Endothelial cell of umbilical vein (primary cell): ENCODE measurements at regions of chr20 and their contacts with region 1.

Region 1: DNA sequence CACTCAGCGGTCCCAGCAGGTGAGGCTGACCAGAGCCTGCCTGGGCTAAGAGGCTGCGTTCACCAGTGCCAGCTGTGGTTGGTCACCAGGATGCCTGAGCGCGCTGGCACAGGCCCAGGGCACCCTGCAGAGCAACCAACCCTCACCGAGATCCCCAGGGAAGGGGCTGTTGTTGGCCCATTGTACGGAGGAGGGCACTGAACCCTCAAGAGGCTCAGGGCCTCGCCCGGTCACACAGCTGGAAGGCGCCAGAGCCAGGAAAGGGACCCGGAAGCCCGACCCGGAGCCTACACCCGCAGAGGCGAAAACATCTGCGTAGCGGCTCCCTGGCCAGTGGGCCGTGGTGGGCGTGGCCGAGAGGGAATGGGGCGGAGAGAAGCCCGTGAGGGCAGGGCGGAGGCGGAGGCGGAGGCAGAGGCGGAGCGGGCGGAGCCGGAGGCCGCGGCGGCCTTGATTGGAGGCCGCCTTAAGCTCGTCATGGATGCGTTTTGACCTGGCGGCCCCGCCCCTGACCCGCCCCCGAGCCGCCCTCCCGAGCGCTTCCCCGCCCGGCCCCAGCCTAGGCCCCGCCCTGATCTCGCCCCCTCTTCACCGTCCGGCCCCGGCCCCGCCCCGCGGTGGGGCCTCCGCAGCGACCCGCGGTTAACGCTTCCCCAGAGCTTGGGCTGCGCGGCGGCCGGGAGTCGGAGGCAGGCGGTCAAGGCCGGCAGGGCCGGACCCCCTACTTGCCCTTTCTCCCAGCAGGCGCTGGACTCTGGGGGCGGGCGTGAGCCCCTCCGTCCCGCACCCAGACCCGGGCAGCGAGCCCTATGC is 2.2 kb upstream of the MRGBP start:
- DNase-seq: peak; percentile 96
- H3K4me3 ChIP-seq: peak overlapping the region; percentile 4 to 60 (median 43)
- H3K27ac ChIP-seq: peak overlapping the region; percentile 72
- H3K4me1 ChIP-seq: peaks cover 22% of the 10 kb centered on the region
- H3K27me3 ChIP-seq: no peaks in the 10 kb centered on the region
- CTCF ChIP-seq: no peak
- POLR2A ChIP-seq: peak; percentile 89

Region 2: DNA sequence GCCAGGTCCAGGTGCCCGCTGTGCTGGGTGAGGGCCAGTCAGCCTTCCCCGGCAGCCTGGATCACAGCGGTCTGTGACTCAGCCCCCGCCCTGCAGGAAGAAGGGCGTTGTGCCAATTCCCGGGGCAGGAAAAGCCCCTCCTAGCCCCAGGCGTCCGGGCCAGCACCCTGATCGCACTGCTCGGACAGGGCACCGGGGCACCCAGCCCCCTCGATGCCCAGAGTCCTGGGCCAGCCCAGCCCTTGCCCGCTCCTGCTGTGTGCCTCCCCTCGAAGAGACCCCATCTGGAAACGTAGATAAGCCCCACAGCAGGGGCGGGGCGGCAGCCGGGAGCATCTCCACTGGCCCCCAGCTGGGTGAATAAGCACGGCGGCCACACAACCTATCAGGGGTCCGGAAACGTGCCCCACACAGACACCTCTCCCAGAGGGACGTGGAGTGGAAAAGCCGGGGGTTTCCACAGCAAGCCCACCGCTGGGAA is 436.9 kb before region 1 on chr20:
- CTCF ChIA-PET with region 1: no interaction called
- POLR2A ChIA-PET with region 1: no interaction called
- dilution Hi-C with region 1: no loop called
- intact Hi-C with region 1: loop called (anchors 1 kb)
- DNase-seq: peak; percentile 84
- H3K4me3 ChIP-seq: no peak overlapping the region
- H3K27ac ChIP-seq: peak overlapping the region; percentile 89
- H3K4me1 ChIP-seq: peaks cover 52% of the 10 kb centered on the region
- H3K27me3 ChIP-seq: no peaks in the 10 kb centered on the region
- CTCF ChIP-seq: no peak
- POLR2A ChIP-seq: peak; percentile 49

Region 3: DNA sequence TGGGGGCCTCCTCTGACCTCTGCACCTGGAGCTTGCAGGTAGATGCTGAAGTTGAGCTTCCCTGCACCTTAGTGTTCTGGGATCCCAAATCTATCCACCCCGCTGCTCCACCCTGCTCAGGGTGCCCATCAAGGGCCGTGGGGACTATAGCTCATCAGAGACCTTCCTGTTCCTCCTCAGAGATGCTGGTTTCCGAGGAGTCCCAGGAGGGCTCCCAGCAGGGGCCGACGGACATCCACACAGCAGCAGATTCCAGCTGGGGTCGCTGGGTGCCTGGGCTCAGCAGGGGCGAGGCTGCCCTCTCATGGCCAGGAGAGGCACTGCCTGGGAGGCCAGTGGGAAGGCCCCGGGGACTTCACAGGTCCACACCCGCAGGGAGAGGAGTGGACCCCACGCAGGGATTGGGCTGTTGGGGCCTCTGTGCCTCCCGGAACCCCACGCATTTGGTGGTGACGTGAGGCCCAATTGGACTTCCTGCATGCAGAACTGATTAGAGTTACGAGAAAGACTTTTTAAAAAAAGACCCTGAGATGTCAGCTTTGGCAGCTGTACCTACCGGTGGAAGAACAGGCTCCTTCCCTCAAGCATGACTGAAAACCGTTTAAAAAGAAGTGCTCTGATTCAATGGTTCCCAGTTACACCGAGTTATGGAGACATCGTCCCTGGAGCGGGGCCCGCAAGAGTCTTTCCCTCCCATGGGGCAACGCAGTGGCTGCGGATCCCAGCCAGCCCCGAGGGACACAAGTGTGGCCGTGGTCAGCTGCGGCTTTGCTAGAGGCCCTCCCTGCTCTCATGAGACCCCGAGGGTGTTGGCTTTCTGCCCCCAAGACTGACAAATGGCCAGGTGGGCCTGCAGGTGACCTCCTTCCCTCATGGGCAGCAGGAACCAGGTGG is 177.1 kb before region 1 on chr20:
- CTCF ChIA-PET with region 1: interaction called, 15 read pairs
- POLR2A ChIA-PET with region 1: no interaction called
- dilution Hi-C with region 1: no loop called
- intact Hi-C with region 1: no loop called
- DNase-seq: peak; percentile 75
- H3K4me3 ChIP-seq: no peak overlapping the region
- H3K27ac ChIP-seq: no peak overlapping the region
- H3K4me1 ChIP-seq: peaks cover 20% of the 10 kb centered on the region
- H3K27me3 ChIP-seq: no peaks in the 10 kb centered on the region
- CTCF ChIP-seq: peak; percentile 96 to 99
- POLR2A ChIP-seq: no peak

Region 4: DNA sequence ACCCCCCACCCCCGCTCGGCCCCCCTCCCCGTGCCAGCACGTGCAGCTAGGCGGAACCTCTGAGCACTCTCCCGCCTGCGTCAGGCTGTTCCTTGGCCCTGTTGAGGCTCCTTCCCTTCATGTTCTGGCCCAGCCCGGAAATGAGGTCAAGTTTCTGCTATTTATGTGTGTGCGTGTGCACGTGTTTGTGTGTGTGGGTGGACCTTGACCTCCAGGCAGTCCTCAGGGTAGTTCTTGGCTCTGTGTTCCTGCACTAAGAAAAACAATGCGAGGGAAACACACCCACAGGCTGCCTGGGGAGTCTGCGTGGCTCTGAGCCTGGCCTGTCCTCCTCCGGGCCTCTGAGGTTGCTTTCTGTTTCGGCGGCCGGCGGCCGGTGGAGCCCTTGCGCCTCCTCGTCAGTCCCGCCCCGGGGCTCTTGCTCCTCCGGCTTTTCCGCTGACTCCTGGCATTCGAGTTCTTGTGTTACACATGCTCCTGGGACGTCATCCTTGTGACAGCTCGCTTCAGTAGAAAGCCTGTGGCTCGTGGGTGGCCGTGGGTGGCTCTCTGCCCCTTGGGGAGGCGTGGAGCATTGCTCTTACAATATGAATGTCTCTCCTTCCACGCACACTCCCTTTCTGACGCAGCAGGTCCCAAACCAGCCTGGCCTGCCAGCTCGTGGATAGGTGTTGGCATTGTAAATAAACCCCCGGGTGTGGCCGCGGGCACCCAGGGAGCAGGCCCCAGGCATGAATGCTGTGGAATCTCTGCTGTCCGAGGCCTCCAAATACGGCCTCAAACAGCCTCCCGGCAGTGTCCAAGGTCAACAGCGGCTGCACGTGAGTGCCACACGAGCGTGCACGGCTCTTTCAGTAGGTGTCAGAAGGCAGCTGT is 141.8 kb before region 1 on chr20:
- CTCF ChIA-PET with region 1: interaction called, 4 read pairs
- POLR2A ChIA-PET with region 1: no interaction called
- dilution Hi-C with region 1: no loop called
- intact Hi-C with region 1: loop called (anchors 1 kb)
- DNase-seq: peak; percentile 96
- H3K4me3 ChIP-seq: no peak overlapping the region
- H3K27ac ChIP-seq: peak overlapping the region; percentile 68
- H3K4me1 ChIP-seq: peaks cover 13% of the 10 kb centered on the region
- H3K27me3 ChIP-seq: no peaks in the 10 kb centered on the region
- CTCF ChIP-seq: no peak
- POLR2A ChIP-seq: no peak

Region 5: GRCh38 chr20:62704301-62704948 is 89.7 kb before region 1 on chr20:
- CTCF ChIA-PET with region 1: interaction called, 98 read pairs
- POLR2A ChIA-PET with region 1: interaction called, 3 read pairs
- dilution Hi-C with region 1: no loop called
- intact Hi-C with region 1: loop called (anchors 1 kb)
- DNase-seq: peak; percentile 99
- H3K4me3 ChIP-seq: no peak overlapping the region
- H3K27ac ChIP-seq: peak overlapping the region; percentile 91
- H3K4me1 ChIP-seq: peaks cover 26% of the 10 kb centered on the region
- H3K27me3 ChIP-seq: peaks cover 0 to 14% of the 10 kb centered on the region in 2 experiments
- CTCF ChIP-seq: peak in 1 of 2 donors; percentile 35
- POLR2A ChIP-seq: no peak

Region 6: GRCh38 chr20:62782149-62782892 is 11.8 kb before region 1 on chr20:
- CTCF ChIA-PET with region 1: interaction called, 17 read pairs
- POLR2A ChIA-PET with region 1: no interaction called
- dilution Hi-C with region 1: no loop called
- intact Hi-C with region 1: no loop called
- DNase-seq: no peak
- H3K4me3 ChIP-seq: no peak overlapping the region
- H3K27ac ChIP-seq: no peak overlapping the region
- H3K4me1 ChIP-seq: peaks cover 5% of the 10 kb centered on the region
- H3K27me3 ChIP-seq: no peaks in the 10 kb centered on the region
- CTCF ChIP-seq: no peak
- POLR2A ChIP-seq: no peak